Activated CD4-positive, alpha-beta memory T cell treated with anti-CD3 and anti-CD28 coated beads, Interleukin-2, amount 10 ng/mL, durations not matched to agents 7 days and 5 days (primary cell): ENCODE measurements at regions of chr1 and their contacts with region 1.

Region 1: DNA sequence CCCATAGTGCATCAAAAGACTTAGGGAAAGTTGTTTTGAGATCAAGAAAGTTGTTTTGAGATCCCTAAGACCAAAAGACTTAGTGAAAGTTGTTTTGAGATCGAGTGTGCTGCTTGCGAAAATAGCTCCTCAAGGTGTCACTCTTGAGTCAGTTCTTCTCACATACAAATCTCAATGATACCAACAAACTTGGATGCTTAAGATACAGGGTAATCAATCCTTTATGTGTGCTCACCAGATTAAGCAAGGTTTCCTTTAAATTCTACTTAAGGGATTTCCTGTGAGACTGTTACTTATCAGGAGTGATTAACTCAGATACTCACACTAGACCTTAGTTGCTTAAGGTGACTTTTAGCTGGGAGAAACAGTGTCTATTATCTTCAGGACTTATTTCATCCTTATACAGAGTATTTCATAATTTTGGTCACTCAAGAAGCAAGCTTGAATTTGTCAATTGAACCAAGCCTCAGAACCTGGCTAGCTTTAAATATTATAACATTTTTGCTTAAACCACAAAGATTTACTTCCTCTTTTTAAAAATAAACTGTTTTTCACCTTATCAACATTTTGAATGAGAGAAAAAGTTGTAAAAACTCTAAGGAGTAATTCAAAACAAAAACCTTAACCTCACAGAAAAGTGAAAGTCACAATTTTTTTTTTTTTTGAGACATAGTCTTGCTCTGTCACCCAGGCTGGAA is 8.0 kb upstream of the RLF start:
- DNase-seq: peak; percentile 37
- H3K4me3 Mint-ChIP-seq: no peak overlapping the region
- H3K27ac Mint-ChIP-seq: no peak overlapping the region
- H3K4me1 Mint-ChIP-seq: peaks cover 6% of the 10 kb centered on the region
- H3K27me3 Mint-ChIP-seq: peaks cover 5% of the 10 kb centered on the region

Region 2: DNA sequence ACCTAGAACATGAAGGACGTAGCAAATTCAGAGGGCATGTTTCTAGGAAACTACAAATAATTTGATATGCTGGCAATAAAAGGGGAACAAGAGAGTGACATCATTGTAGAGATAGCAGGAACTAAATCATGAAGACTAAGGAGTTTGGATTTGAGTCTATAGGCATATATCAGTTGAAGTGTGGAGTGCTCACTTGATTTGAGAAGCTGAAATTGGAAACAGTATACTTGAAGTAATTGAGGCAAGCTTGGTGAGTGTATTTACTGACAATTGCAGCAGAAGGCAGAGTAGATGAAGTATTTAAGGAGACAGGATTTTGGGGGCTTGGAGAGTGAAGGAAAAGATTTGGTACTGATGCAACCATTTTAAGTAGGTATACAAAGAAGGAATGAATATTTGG is 88.1 kb after region 1 on chr1:
- CTCF ChIA-PET with region 1: interaction called, 15 read pairs
- POLR2A ChIA-PET with region 1: no interaction called
- DNase-seq: no peak
- H3K4me3 Mint-ChIP-seq: peak overlapping the region; percentile 1
- H3K27ac Mint-ChIP-seq: peak overlapping the region; percentile 77
- H3K4me1 Mint-ChIP-seq: peaks cover 56% of the 10 kb centered on the region
- H3K27me3 Mint-ChIP-seq: no peaks in the 10 kb centered on the region